Activated CD4-positive, alpha-beta T cell treated with anti-CD3 and anti-CD28 coated beads for 36 hours (primary cell): ENCODE measurements at regions of chr12 and their contacts with region 1.

Region 1: GRCh38 chr12:108514973-108515814 is at the start of gene FICD:
- DNase-seq: peak; percentile 100
- ATAC-seq: peak; percentile 93
- H3K4me3 Mint-ChIP-seq: peak within 1 kb of the TSS; percentile 82
- H3K27ac Mint-ChIP-seq: peak within 1 kb of the TSS; percentile 83
- H3K4me1 Mint-ChIP-seq: peaks cover 26% of the 10 kb centered on the region
- H3K27me3 Mint-ChIP-seq: no peaks in the 10 kb centered on the region
- total RNA-seq, gene FICD: 3.5 to 4.5 TPM

Region 2: GRCh38 chr12:107760809-107761501 is 754.2 kb before region 1 on chr12 and contains the start of gene PRDM4:
- CTCF ChIA-PET with region 1: no interaction called
- POLR2A ChIA-PET with region 1: no interaction called
- intact Hi-C with region 1: loop called (anchors 2 kb)
- DNase-seq: peak; percentile 95
- ATAC-seq: peak; percentile 93
- H3K4me3 Mint-ChIP-seq: peak within 1 kb of the TSS; percentile 92
- H3K27ac Mint-ChIP-seq: peak within 1 kb of the TSS; percentile 91
- H3K4me1 Mint-ChIP-seq: peaks cover 27% of the 10 kb centered on the region
- H3K27me3 Mint-ChIP-seq: no peaks in the 10 kb centered on the region
- total RNA-seq, gene PRDM4: 27.5 to 29.7 TPM

Region 3: DNA sequence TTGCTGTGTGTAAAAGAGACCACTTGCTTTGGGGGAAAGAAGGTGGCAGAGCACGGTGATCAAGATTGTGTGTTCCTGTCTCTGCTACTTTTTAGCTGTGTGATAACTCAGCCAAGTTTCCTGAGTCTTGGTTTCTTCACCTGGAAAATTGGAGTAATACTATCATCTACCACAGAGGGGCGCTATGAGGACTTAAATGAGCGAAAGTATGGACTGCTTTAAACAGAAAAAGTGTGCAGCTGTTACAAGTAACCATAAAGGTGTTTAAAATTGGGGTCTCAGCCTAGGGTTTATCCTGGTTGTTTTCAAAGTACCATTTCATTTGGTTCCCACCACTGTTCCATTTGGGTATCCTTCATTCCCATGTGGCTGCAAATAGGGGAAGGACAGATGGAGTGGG is 452.0 kb before region 1 on chr12:
- CTCF ChIA-PET with region 1: no interaction called
- POLR2A ChIA-PET with region 1: no interaction called
- intact Hi-C with region 1: loop called in 1 of 2 experiments (anchors 1 kb)
- DNase-seq: no peak
- ATAC-seq: no peak
- H3K4me3 Mint-ChIP-seq: no peak overlapping the region
- H3K27ac Mint-ChIP-seq: no peak overlapping the region
- H3K4me1 Mint-ChIP-seq: no peaks in the 10 kb centered on the region
- H3K27me3 Mint-ChIP-seq: peaks cover 18% of the 10 kb centered on the region

Region 4: GRCh38 chr12:108190529-108190928 is 324.7 kb before region 1 on chr12:
- CTCF ChIA-PET with region 1: no interaction called
- POLR2A ChIA-PET with region 1: no interaction called
- intact Hi-C with region 1: no loop called
- DNase-seq: no peak
- ATAC-seq: no peak
- H3K4me3 Mint-ChIP-seq: no peak overlapping the region
- H3K27ac Mint-ChIP-seq: no peak overlapping the region
- H3K4me1 Mint-ChIP-seq: no peaks in the 10 kb centered on the region
- H3K27me3 Mint-ChIP-seq: peaks cover 10% of the 10 kb centered on the region

Region 5: DNA sequence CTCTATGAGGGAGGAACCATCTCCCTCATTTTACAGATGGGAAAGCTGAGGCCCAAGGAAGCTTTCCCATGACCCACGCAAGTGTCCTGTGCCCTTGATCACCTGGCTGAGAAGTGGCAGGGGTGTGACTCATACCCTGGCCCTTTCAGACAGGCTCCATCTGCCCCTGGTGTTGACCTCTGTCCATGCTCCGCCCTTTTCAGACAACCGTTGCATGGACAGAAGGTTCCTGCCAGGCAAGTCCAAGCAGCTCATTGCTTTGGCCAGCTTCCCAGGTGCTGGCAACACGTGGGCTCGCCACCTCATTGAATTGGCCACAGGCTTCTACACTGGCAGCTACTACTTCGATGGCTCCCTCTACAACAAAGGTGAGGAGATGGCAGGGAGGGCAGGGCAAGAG is 282.7 kb before region 1 on chr12:
- CTCF ChIA-PET with region 1: no interaction called
- POLR2A ChIA-PET with region 1: no interaction called
- intact Hi-C with region 1: no loop called
- DNase-seq: no peak
- ATAC-seq: no peak
- H3K4me3 Mint-ChIP-seq: no peak overlapping the region
- H3K27ac Mint-ChIP-seq: no peak overlapping the region
- H3K4me1 Mint-ChIP-seq: no peaks in the 10 kb centered on the region
- H3K27me3 Mint-ChIP-seq: peaks cover 23% of the 10 kb centered on the region

Region 6: DNA sequence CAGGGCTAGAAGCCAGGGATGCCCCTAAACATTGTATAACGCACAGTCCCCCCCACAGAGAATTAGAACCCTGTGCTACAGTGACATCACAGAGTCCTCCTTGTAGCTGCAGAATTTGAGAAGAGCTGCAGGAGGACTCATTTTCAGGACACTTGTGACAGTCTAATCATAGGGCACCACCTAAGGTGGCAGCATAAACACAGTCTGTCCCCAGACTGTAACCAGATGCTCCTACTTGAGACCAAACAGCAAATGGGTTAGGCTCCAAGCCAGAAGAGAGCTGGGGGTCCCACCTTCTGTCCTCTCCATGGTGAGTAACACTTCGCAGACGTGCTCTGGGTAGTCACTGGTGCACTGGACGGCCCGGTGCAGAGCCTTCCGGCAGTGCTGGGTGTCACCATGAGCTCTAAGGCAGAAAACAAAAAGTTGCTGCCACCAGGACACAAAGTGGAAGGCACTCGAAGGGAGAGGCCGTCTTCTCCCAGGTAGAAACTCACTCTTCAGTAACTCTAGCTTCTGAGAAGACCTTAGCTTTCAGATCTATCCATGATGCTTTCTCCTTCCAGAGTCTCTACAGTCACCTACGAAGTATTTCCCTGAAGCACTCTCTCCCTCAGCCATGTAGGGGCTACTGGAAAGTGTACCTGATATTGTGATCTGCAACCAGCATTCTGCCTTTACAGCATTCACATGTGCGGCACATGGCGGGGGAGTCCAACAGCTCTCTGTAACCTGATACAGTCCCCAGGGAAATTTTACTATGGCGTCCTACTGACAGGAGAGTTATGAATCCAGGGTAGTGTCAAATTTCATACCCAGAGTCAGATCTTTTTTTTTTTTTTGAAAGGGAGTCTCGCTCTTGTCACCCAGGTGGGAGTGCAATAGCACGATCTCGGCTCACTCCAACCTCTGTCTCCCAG is 17.0 kb after region 1 on chr12:
- CTCF ChIA-PET with region 1: interaction called, 17 read pairs
- POLR2A ChIA-PET with region 1: no interaction called
- intact Hi-C with region 1: no loop called
- DNase-seq: no peak
- ATAC-seq: no peak
- H3K4me3 Mint-ChIP-seq: no peak overlapping the region
- H3K27ac Mint-ChIP-seq: no peak overlapping the region
- H3K4me1 Mint-ChIP-seq: no peaks in the 10 kb centered on the region
- H3K27me3 Mint-ChIP-seq: no peaks in the 10 kb centered on the region

Region 7: DNA sequence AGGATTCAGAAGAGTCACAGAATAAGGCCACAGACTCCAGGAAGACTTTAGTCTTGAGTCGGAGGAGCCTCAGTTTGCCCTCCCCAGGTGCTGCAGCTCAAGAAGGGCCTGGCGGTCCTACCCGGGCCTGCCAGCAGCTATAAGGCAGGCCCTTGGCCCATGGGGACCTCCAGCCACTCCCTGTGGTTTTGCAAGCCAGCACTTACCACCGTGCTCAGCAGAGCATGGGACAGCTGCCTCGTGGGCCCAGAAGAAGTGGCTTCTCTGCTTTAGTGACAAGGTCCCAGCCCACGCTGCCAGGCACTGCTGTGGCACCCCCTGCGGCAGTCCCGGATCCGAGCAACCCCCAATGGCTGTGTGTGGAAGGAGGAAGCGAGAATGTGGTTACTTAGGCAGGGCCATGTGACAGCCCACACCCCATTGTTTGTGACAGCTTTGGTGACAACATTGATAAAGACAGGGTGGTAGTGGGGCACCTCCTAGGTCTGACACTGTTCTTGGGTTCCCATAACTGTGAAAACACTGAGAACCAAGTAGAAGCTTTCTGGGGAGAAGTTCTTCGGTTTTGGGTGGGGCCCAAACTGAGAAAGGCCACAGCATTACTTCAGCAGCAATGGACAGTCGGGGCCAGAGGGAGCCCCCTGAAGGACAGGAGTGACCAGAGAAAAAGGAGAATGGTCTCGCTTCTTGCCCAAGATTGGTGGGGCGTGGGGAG is 118.5 kb after region 1 on chr12 and contains the start of gene SELPLG:
- CTCF ChIA-PET with region 1: interaction called, 4 read pairs
- POLR2A ChIA-PET with region 1: no interaction called
- intact Hi-C with region 1: loop called (anchors 5 kb)
- DNase-seq: peak; percentile 92
- ATAC-seq: peak; percentile 53
- H3K4me3 Mint-ChIP-seq: peak within 1 kb of the TSS; percentile 81
- H3K27ac Mint-ChIP-seq: peak within 1 kb of the TSS; percentile 99
- H3K4me1 Mint-ChIP-seq: peaks cover 61% of the 10 kb centered on the region
- H3K27me3 Mint-ChIP-seq: no peaks in the 10 kb centered on the region
- total RNA-seq, gene SELPLG: 31.0 to 36.9 TPM

Region 8: GRCh38 chr12:109052414-109053323 is 537.5 kb after region 1 on chr12 and contains the start of gene USP30:
- CTCF ChIA-PET with region 1: no interaction called
- POLR2A ChIA-PET with region 1: no interaction called
- intact Hi-C with region 1: loop called in 1 of 2 experiments (anchors 2 kb)
- DNase-seq: peak; percentile 91
- ATAC-seq: peak; percentile 70
- H3K4me3 Mint-ChIP-seq: peak within 1 kb of the TSS; percentile 86
- H3K27ac Mint-ChIP-seq: peak within 1 kb of the TSS; percentile 97
- H3K4me1 Mint-ChIP-seq: peaks cover 6% of the 10 kb centered on the region
- H3K27me3 Mint-ChIP-seq: no peaks in the 10 kb centered on the region
- total RNA-seq, gene USP30: 9.2 to 14.5 TPM

Region 9: GRCh38 chr12:110065540-110065939 is 1550.3 kb after region 1 on chr12:
- CTCF ChIA-PET with region 1: no interaction called
- POLR2A ChIA-PET with region 1: no interaction called
- intact Hi-C with region 1: no loop called
- DNase-seq: no peak
- ATAC-seq: peak; percentile 67
- H3K4me3 Mint-ChIP-seq: no peak overlapping the region
- H3K27ac Mint-ChIP-seq: peak overlapping the region; percentile 42
- H3K4me1 Mint-ChIP-seq: peaks cover 13% of the 10 kb centered on the region
- H3K27me3 Mint-ChIP-seq: no peaks in the 10 kb centered on the region